ENCODE measurements at regions of chr11 and their contacts with region 1.

Region 1: DNA sequence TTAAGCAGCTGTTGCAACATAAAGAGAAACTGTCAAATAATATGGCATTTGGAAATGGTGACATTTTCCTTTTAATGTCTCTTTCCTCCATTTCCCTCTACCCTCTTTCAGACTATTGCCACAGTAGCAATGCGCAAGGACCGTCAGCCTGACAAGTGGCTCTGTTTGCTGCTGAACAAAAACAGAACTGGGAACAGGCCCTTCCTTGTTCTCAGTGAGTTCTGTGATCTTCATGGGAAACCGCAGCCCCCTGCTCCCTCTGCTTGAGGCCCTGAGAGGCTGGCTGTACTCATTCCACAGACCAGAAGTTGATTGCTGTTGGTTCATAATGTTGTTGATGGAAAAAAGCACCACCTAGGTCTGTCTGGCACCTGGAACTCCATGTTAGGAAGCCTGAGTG is 559.7 kb downstream of the OPCML start:
- DNase-seq: no peak
- ATAC-seq: no peak
- H3K4me3 ChIP-seq: no peak overlapping the region
- H3K27ac ChIP-seq: no peak overlapping the region
- H3K4me1 ChIP-seq: no peaks in the 10 kb centered on the region
- H3K27me3 ChIP-seq: peaks cover 0 to 4% (median 0%) of the 10 kb centered on the region in 9 donors
- CTCF ChIP-seq: no peak
- POLR2A ChIP-seq: no peak

Region 2: DNA sequence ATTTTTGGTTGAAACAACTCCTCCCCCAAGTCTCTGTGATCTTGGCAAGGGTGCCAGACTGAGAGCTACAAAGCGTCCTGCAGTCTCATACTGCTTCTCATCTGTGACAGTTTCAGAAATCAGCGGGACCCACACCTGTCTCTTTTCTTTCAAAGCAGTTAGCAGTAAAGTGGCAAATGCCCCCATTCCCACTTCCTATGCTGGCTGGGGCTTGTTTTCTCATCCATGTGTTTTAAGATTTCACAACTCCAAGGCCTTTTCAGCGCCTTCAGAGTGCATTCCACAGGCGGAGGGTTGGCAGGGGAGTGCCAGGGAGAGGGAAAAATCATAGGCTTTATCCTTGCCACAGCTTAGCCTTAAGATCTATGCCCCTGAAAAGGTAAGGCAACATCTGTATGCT is 66.3 kb after region 1 on chr11:
- intact Hi-C with region 1: loop called in 1 of 10 experiments (anchors 10 kb)
- DNase-seq: no peak
- ATAC-seq: no peak
- H3K4me3 ChIP-seq: no peak overlapping the region
- H3K27ac ChIP-seq: no peak overlapping the region
- H3K4me1 ChIP-seq: no peaks in the 10 kb centered on the region
- H3K27me3 ChIP-seq: peaks cover 0 to 51% (median 8%) of the 10 kb centered on the region in 9 donors
- CTCF ChIP-seq: no peak
- POLR2A ChIP-seq: no peak

Measured in heart left ventricle (tissue), 16 donors.